OCI-LY7 (cell line): ENCODE measurements at regions of chr6 and their contacts with region 1.

Region 1: DNA sequence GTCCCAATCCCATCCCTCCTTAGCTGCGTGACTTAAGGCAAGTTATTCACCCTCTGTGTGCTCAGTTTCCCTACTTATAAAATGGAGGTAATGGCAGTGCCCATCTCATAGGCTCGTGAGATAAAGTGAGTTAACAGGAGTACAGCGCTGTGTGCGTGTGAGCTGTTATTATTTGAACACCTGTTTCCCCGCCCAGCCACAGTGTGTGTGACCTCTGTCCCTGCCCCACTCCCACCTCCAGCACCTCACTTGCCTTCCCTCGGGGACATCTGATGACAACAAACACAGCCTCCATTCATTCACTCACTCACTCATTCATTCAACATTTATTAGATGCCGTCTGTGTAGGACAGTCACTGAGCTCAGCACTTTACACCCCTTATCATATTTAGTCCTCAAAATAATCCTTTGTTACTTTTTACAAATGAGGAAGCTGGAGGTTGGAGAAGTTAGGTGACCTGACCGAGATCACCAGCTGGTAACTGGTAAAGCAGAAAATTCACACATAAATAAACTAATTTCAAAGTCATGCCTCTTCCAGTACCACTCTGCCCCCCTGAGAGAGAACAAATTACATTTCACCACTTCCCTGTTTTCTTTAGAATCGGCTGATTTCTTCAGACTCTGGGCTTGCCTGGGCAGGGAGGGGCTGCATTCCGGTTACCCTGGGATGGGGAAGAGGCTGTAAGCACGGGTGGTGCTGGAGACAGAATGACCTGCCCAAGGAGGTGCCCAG is 58.6 kb downstream of the CPNE5 start:
- DNase-seq: peak; percentile 26
- H3K4me3 ChIP-seq: no peak overlapping the region
- H3K27ac ChIP-seq: no peak overlapping the region
- H3K4me1 ChIP-seq: peaks cover 21% of the 10 kb centered on the region
- CTCF ChIP-seq: no peak

Region 2: DNA sequence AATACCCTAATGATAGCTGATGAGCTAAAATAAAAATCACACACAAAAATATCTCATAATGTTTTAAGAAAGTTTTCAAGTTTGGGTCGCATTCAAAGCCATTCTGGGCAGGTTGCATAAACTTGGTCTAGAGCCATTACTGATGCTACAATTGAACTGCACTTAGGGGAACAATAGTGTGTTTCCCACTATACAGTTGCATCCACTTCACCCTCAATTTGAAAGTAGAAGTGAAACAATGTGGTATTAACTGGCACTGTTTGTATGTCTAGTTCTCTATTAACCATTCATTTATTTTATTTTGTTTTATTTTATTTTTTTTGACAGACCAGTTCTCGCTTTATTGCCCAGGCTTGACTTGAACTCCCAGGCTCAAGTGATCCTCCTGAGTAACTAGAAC is 210.3 kb before region 1 on chr6:
- CTCF ChIA-PET with region 1: no interaction called
- POLR2A ChIA-PET with region 1: no interaction called
- intact Hi-C with region 1: no loop called
- DNase-seq: no peak
- H3K4me3 ChIP-seq: no peak overlapping the region
- H3K27ac ChIP-seq: no peak overlapping the region
- H3K4me1 ChIP-seq: peaks cover 17% of the 10 kb centered on the region
- CTCF ChIP-seq: no peak

Region 3: DNA sequence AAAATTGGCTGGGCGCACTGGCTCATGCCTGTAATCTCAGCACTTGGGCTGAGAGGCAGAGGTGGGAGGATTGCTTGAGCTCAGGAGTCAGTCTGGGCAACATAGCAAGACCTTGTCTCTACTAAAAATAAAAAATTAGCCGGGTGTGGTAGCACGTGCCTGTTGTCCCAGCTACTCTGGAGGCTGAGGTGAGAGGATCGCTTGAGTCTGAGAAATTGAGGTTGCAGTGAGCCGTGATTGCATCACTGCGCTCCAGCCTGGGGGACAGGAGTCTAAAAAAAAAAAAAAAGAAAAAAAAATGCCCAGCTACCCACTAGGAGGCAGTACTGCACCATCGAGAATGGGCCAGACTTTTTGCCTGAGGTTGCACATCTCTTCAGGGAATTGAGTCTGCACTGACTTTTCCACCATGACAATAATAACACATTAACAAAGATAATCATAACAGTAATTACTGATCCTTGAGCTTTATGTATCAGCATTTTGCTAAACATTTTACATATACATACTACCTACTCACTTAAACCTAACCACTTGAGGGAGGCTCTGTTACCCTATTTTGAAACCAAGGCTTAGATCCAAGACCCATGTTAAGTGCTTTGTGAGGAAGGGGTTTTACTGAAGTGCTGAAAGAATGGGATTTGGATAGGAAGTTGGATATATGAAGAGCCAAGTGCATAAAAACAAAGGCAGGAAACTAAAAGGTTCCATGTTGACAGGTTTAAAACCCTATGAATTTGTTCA is 165.4 kb before region 1 on chr6:
- CTCF ChIA-PET with region 1: interaction called, 4 read pairs
- POLR2A ChIA-PET with region 1: interaction called, 3 read pairs
- intact Hi-C with region 1: loop called (anchors 5 kb)
- DNase-seq: peak; percentile 78
- H3K4me3 ChIP-seq: no peak overlapping the region
- H3K27ac ChIP-seq: no peak overlapping the region
- H3K4me1 ChIP-seq: peaks cover 14% of the 10 kb centered on the region
- CTCF ChIP-seq: peak; percentile 91

Region 4: GRCh38 chr6:36765594-36766398 is 14.8 kb before region 1 on chr6:
- CTCF ChIA-PET with region 1: interaction called, 43 read pairs
- POLR2A ChIA-PET with region 1: interaction called, 9 read pairs
- intact Hi-C with region 1: loop called (anchors 1 kb)
- DNase-seq: peak; percentile 91
- H3K4me3 ChIP-seq: peak overlapping the region; percentile 2
- H3K27ac ChIP-seq: peak overlapping the region; percentile 4
- H3K4me1 ChIP-seq: peaks cover 45% of the 10 kb centered on the region
- CTCF ChIP-seq: peak; percentile 99

Region 5: GRCh38 chr6:36851149-36851614 is 70.6 kb after region 1 on chr6:
- CTCF ChIA-PET with region 1: no interaction called
- POLR2A ChIA-PET with region 1: no interaction called
- intact Hi-C with region 1: loop called (anchors 5 kb)
- DNase-seq: peak; percentile 71
- H3K4me3 ChIP-seq: no peak overlapping the region
- H3K27ac ChIP-seq: no peak overlapping the region
- H3K4me1 ChIP-seq: no peaks in the 10 kb centered on the region
- CTCF ChIP-seq: peak; percentile 98